Ascending aorta (tissue), 2 donors: ENCODE measurements at regions of chr20 and their contacts with region 1.

Region 1: DNA sequence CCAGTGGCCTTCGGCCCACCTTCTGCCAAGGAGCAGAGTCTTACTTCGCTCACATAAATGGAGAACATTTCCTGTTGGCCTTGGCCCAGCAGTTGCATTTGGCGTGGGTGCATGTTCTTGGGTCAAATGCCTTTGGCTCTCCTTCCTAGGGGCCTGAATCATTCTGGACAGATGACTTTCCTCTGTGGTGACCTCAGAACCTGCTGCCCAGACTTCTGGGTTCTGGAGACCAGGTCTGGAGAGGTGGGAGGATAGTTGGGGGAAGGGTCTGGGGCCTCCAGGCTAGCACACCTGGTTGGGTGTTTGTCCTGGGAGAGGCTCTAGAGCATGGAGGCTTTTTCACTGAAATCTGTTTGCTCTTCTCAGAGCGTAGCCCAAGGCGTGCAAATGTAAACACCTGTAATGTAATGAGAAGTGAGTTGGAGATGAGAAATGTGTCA is 29.4 kb downstream of the BCAS4 start:
- DNase-seq: peak; percentile 74 to 97
- H3K4me3 ChIP-seq: no peak overlapping the region
- H3K27ac ChIP-seq: peak overlapping the region; percentile 69 to 92
- H3K4me1 ChIP-seq: peaks cover 3 to 27% of the 10 kb centered on the region in 2 donors
- H3K27me3 ChIP-seq: no peaks in the 10 kb centered on the region
- CTCF ChIP-seq: no peak

Region 2: DNA sequence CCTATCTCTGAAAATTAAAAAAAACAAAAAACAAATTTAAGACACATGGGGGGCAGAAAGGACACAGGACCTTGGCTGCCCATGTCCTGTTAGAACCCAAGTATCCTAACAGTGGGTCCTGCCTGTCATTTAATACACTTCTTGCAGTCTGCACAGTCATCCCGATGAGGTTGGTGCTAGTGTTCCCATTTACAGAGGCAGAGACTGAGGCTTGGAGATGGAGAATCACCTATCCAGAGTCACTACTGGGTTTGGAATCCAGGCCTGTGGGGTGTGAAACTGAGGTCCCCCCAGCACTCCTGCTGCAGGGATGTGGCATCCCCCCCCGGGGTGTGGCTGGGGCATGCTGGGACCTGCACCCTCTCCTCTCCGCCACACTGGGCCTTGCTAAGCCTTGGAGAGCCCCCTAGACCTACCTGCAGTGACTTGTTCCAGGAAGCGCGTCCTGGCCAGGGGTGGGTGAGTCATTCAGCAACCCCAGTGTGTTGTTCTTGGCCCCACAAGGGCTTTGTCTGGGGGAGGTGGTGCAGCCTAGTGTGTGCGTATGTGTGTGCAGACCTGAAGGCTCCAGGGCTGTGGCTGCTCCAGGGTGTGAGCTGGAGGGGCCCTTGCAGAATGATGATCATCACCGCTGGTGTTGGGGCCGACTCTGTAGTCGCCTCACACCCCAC is 20.4 kb after region 1 on chr20:
- intact Hi-C with region 1: loop called (anchors 2 kb)
- DNase-seq: peak; percentile 48 to 85
- H3K4me3 ChIP-seq: no peak overlapping the region
- H3K27ac ChIP-seq: peak overlapping the region; percentile 33 to 61
- H3K4me1 ChIP-seq: peaks cover 4 to 28% of the 10 kb centered on the region in 2 donors
- H3K27me3 ChIP-seq: no peaks in the 10 kb centered on the region
- CTCF ChIP-seq: no peak